HCT116 (cell line): ENCODE measurements at regions of chr3 and their contacts with region 1.

Region 1: DNA sequence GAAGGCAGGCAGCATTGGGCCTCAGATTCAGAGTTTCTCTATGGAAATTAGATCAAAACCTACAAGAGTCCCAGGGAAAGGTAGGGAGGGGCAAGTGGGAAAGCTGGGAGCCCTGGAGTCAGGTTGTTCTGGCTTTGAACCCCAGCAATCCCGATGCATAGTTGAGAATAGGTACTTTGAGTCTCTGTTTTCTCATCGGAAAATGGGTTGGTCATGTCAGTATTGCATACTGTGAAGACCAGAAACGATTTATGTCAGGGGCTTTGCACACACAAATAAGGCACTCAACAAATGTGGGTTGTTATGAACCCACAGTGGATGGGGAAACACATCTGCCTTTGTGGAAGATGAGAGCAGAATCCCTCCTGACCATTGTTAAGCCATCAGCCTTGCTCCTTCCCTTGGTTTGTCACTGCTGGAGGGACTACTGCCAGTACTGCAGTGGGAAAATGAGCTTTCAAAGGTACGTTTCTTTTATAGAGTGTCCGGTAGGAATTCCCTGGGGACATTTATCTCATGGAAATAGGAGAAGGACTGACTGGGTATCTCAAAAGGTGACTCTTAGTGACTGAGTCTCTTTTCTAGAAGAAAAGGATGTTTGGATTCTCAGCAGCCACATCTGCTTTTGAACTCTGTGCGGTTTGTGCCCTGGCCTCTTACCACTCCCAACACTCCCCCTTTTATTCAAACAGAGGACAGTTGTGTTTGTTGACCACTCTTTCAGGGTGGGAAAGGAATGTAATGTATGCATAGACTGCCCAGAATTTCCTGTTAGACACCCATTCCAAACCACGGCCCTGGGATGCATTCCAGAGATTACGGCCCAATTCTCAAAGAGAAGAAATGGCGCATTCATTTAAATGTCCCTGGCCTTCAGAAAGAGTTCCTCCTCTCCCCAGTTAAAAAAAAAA is 54.6 kb upstream of the VILL start:
- DNase-seq: peak; percentile 46
- ATAC-seq: peak; percentile 86
- H3K4me3 ChIP-seq: peak overlapping the region in 1 of 2 experiments; percentile 15; a peak in 2 of 4 replicates
- H3K27ac ChIP-seq: peak overlapping the region; percentile 27
- H3K4me1 ChIP-seq: peaks cover 38 to 44% of the 10 kb centered on the region in 2 experiments
- H3K27me3 ChIP-seq: no peaks in the 10 kb centered on the region
- CTCF ChIP-seq: no peak
- POLR2A ChIP-seq: no peak
- RAD21 ChIP-seq: no peak

Region 2: DNA sequence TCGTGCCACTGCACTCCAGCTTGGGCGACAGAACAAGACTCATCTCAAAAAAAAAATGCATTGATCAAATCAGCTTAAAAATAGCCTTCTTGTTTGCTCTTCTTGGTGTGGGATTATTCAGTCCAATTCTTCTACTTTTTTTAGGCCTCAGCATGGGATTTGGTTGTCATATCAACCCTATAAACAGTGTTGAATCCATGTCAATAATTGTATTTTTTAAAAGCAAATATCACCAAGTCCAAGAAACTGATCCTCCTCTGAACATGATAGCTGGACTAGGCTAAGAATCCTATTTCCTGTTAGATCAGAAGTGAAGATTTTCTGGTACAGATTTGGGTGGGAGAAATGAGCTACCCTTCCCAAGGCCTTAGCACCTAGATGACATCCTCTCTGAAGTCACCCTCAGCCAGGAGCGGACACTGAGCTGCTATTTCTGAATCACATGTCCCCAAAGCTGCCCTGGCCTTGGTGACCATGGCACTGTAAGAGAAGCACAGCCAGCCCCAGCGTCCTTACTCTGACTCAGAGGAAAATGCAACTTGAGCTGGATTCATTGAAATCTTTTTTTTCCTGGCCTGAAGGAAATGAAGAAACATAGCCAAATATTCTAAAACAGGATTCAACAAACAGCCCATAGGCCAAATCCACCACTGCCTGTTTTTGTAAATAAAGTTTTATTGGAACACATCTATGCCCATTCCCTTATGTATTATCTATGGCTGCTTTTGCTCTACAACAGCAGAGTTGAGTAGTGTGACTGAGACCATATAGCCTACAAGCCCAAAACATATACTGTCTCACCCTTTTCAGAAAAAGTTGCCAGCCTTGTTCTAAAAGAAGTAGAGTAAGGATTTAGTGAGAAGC is 290.3 kb before region 1 on chr3:
- CTCF ChIA-PET with region 1: no interaction called
- POLR2A ChIA-PET with region 1: no interaction called
- RAD21 ChIA-PET with region 1: no interaction called
- intact Hi-C with region 1: no loop called
- DNase-seq: no peak
- ATAC-seq: no peak
- H3K4me3 ChIP-seq: no peak overlapping the region
- H3K27ac ChIP-seq: no peak overlapping the region
- H3K4me1 ChIP-seq: no peaks in the 10 kb centered on the region
- H3K27me3 ChIP-seq: no peaks in the 10 kb centered on the region
- CTCF ChIP-seq: no peak
- POLR2A ChIP-seq: no peak
- RAD21 ChIP-seq: no peak

Region 3: GRCh38 chr3:37882711-37883110 is 53.3 kb before region 1 on chr3:
- CTCF ChIA-PET with region 1: no interaction called
- POLR2A ChIA-PET with region 1: no interaction called
- RAD21 ChIA-PET with region 1: no interaction called
- intact Hi-C with region 1: loop called (anchors 1 kb)
- DNase-seq: no peak
- ATAC-seq: no peak
- H3K4me3 ChIP-seq: no peak overlapping the region
- H3K27ac ChIP-seq: no peak overlapping the region
- H3K4me1 ChIP-seq: no peaks in the 10 kb centered on the region
- H3K27me3 ChIP-seq: no peaks in the 10 kb centered on the region
- CTCF ChIP-seq: no peak
- POLR2A ChIP-seq: no peak
- RAD21 ChIP-seq: no peak